Head of caudate nucleus (tissue), 42 donors: ENCODE measurements at regions of chr2 and their contacts with region 1.

Region 1: GRCh38 chr2:235595422-235596010 is 101.7 kb downstream of the AGAP1 start:
- DNase-seq: peak in 41 of 42 donors; percentile 56 to 95 (median 81)

Region 2: GRCh38 chr2:235135990-235136561 is 459.4 kb before region 1 on chr2:
- intact Hi-C with region 1: loop called (anchors 5 kb)
- DNase-seq: peak; percentile 45 to 96 (median 84)

Region 3: DNA sequence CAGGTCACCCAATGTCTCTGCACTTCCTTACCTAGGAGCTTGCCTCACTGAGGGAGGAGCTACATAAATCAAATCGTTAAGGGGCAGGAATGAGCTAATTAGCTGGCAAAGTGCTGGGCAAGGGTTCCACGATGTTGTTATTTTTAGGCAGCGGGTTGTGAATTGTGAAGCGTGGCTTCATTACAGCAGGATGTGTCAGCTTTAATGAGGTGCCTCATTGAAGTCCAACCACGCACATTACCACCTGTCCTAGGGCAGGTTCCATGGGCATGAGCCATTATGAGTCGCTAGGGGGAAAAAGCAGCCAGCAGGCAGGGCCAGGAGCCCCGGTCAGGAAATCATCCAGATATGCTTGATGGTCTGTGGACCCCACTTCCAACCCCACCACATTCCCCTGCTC is 228.7 kb before region 1 on chr2:
- intact Hi-C with region 1: no loop called
- DNase-seq: no peak

Region 4: GRCh38 chr2:235433860-235434259 is 161.7 kb before region 1 on chr2:
- intact Hi-C with region 1: loop called (anchors 10 kb)
- DNase-seq: peak in 38 of 42 donors; percentile 36 to 87 (median 66)

Region 5: GRCh38 chr2:235500761-235501672 is 94.5 kb before region 1 on chr2:
- intact Hi-C with region 1: loop called (anchors 5 kb)
- DNase-seq: peak in 12 of 42 donors; percentile 30 to 74 (median 41)

Region 6: DNA sequence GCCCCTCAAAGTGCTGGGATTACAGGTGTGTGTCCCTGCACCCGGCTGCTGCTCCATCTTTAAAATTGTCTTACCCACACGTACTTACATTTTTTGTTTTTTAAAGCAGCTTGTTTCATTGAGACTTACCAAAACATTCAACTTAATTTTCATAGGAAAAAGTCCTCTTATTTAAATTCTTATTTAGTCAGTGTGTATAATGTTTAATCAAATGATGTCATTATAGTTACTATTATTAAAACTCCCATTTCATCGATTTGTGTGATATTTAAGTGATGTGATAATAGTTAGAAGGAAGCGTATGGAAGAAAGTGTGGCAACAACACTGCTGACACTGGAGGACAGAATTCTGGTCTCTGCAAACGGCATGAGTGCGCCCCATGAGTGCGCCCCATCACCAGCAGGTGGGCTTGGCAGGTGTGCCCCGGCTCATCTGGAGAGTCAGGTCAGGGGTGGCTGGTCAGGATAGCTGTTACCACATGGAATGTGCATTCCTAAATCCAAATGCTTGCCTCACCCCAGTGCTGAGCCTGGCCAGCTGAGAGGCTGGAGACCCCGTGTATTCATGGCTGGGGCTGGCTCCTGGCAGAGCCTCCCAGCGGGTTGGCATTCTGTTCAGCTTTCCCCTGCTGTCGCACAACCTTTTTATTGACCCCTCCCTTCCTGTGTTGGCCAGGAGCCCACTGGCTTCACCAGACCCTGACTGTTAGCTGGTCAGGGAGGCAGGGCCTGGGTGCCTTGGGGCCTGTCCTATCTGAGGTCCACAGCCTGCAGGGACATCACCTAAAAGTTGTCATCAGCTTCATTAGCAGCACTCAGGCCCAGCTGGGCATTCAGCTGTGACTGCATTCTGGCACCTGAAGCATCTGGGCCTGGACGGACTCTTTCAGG is 21.9 kb before region 1 on chr2:
- intact Hi-C with region 1: no loop called
- DNase-seq: peak in 6 of 42 donors; percentile 25 to 65 (median 44)

Region 7: GRCh38 chr2:235669269-235669831 is 73.8 kb after region 1 on chr2:
- intact Hi-C with region 1: loop called (anchors 2 kb)
- DNase-seq: peak in 41 of 42 donors; percentile 47 to 93 (median 81)

Region 8: GRCh38 chr2:235746257-235747084 is 151.0 kb after region 1 on chr2:
- intact Hi-C with region 1: loop called (anchors 2 kb)
- DNase-seq: peak in 41 of 42 donors; percentile 35 to 90 (median 76)

Region 9: GRCh38 chr2:235883675-235884074 is 288.2 kb after region 1 on chr2:
- intact Hi-C with region 1: no loop called
- DNase-seq: no peak